Common myeloid progenitor, CD34-positive (primary cell): ENCODE measurements at regions of chr12 and their contacts with region 1.

Region 1: GRCh38 chr12:48851883-48852733 is at the start of gene DDX23:
- DNase-seq: peak; percentile 96 to 98 (median 97)
- H3K4me3 ChIP-seq: peak within 1 kb of the TSS; percentile 70 to 99 (median 95)
- H3K27ac ChIP-seq: peak within 1 kb of the TSS; percentile 88 to 93
- H3K4me1 ChIP-seq: peaks cover 8 to 24% (median 21%) of the 10 kb centered on the region in 4 experiments
- H3K27me3 ChIP-seq: no peaks in the 10 kb centered on the region

Region 2: DNA sequence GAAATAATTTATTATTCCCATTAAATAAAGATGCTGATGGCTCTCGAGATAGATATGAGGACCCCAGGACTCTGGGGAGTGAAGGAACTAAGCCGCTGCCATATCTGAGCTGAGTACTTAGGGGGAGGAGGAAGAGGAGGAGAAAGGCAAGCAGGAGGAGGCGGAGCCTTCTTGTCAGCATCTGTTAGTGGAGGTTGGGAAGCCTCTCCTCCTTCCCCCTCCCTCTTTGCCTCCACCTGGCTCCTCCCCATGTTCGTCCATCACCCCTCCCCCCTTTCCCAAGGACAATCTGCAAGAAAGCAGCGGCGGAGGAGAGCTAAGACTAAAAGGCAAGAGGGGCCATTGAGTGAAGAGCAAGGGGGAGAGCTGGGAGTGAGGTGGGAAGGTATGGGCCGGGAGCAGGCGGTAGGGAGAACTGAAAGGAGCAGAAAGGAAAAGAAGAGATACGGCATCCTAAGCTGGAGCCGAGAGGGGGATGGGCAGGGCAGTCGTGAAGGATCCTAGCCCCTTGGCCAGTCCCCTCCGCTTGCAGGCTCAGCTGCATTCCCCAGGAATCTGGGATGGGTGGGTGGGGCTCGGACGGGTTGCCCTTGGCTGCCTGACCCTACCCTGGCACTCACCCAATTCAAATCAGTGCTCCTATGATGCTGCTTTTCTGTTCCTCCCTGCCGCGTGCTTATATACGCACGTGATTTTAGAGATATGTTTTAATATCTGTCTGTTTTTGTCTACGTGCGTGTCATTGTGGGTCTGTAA is 732.9 kb before region 1 on chr12 and contains the start of gene PFKM:
- CTCF ChIA-PET with region 1: no interaction called
- POLR2A ChIA-PET with region 1: no interaction called
- DNase-seq: peak; percentile 75 to 89 (median 88)
- H3K4me3 ChIP-seq: peak within 1 kb of the TSS; percentile 56 to 94 (median 81)
- H3K27ac ChIP-seq: no peak within 1 kb of the TSS
- H3K4me1 ChIP-seq: peaks cover 8 to 15% (median 11%) of the 10 kb centered on the region in 4 experiments
- H3K27me3 ChIP-seq: no peaks in the 10 kb centered on the region

Region 3: GRCh38 chr12:48865434-48866290 is 13.6 kb after region 1 on chr12 and contains the start of gene RND1:
- CTCF ChIA-PET with region 1: interaction called, 49 read pairs
- POLR2A ChIA-PET with region 1: interaction called, 13 read pairs
- DNase-seq: peak; percentile 92 to 94 (median 93)
- H3K4me3 ChIP-seq: peak within 1 kb of the TSS; percentile 23 to 81 (median 68)
- H3K27ac ChIP-seq: no peak within 1 kb of the TSS
- H3K4me1 ChIP-seq: peaks cover 0 to 29% (median 22%) of the 10 kb centered on the region in 4 experiments
- H3K27me3 ChIP-seq: peaks cover 0 to 18% (median 13%) of the 10 kb centered on the region in 5 experiments

Region 4: GRCh38 chr12:48890657-48891418 is 38.7 kb after region 1 on chr12:
- CTCF ChIA-PET with region 1: interaction called, 189 read pairs
- POLR2A ChIA-PET with region 1: no interaction called
- DNase-seq: peak; percentile 60 to 73 (median 67)
- H3K4me3 ChIP-seq: peak overlapping the region in 2 of 7 experiments; percentile 22 to 50
- H3K27ac ChIP-seq: no peak overlapping the region
- H3K4me1 ChIP-seq: peaks cover 0 to 7% (median 2%) of the 10 kb centered on the region in 4 experiments
- H3K27me3 ChIP-seq: peaks cover 3 to 18% (median 5%) of the 10 kb centered on the region in 5 experiments

Region 5: GRCh38 chr12:48924617-48925303 is 72.7 kb after region 1 on chr12:
- CTCF ChIA-PET with region 1: interaction called, 14 read pairs
- POLR2A ChIA-PET with region 1: no interaction called
- DNase-seq: peak; percentile 78 to 86 (median 84)
- H3K4me3 ChIP-seq: peak overlapping the region; percentile 75 to 99 (median 96)
- H3K27ac ChIP-seq: peak overlapping the region; percentile 46 to 74
- H3K4me1 ChIP-seq: peaks cover 0 to 13% (median 9%) of the 10 kb centered on the region in 4 experiments
- H3K27me3 ChIP-seq: no peaks in the 10 kb centered on the region

Region 6: DNA sequence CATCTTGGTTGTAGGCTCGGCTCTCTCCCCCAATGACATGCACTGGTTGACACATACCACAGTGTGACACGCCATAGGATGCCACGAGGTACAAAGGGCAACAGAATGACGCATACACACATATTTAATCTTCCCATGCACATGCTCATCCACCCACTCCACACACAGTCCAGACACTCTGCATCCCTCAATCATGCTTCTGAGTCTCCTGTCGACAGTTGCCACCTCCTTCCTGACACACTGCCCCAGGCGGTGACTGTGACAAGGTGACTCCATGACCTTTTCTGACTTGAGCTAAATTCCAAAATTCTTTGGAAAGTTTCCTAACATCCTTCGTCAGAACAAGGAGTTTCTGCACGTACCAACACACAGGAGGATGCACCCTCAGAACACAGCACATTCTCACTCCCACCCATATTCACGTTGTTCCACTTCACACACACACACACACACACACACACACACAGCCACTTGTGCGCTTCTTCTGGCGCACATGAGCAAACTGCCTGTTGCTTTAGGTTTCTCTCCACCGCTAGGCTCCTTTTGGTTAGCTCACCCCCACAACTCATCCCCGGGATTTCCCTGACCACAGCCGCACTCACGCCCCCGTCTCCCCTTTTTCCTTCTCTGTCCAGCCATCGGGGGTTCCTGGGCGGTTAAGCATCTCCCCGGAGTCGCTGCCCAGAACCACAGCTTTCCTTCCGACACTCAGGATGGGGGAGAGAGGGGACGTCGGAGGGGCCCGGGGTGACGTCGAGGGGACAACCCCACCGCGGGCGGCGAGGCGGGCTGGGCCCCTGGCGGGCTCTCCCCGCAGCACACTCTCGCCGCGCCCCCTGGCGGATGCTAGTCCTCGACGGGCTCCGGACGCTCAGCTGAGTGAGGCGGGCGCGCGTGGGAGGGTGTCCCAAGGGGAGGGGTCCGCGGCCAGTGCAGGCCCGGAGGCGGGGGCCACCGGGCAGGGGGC is 125.5 kb after region 1 on chr12:
- CTCF ChIA-PET with region 1: interaction called, 12 read pairs
- POLR2A ChIA-PET with region 1: no interaction called
- DNase-seq: peak; percentile 81 to 95 (median 94)
- H3K4me3 ChIP-seq: peak overlapping the region in 2 of 7 experiments; percentile 58 to 66
- H3K27ac ChIP-seq: no peak overlapping the region
- H3K4me1 ChIP-seq: peaks cover 0 to 57% (median 53%) of the 10 kb centered on the region in 4 experiments
- H3K27me3 ChIP-seq: peaks cover 4 to 97% (median 56%) of the 10 kb centered on the region in 5 experiments